PC-9 (cell line): ENCODE measurements at regions of chr11 and their contacts with region 1.

Region 1: DNA sequence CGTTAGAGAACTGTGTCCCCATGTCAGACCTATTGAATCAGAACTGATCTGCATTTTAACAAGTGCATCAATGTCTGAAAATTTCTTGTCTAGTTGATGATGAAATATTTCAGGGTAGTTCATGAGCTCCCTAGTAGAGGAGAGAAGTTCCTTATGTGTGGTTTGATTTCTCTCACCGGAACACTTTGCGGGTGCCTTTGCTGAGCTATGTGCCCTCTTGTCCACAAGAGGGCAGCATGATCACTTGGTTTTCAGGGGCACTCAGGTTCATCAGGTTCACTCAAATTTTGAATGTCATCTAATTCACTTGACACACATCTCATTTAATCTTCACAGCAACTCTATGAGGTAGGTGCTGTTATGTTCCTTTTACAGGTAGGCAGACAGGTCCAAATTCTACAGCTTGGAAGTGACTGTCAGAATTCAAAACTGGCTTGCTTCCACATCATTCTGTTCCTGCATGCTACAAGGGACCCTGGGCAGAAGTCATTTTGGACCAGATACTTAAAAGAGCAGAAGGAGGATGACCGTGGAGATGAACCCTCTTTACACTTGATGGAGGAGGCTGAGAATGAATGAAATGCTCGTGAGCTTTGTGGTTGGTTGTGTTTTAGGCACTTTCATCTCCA is 55.6 kb downstream of the P4HA3 start:
- DNase-seq: peak; percentile 52 to 60
- H3K4me3 ChIP-seq: no peak overlapping the region
- H3K27ac ChIP-seq: no peak overlapping the region
- H3K4me1 ChIP-seq: no peaks in the 10 kb centered on the region
- H3K27me3 ChIP-seq: no peaks in the 10 kb centered on the region
- CTCF ChIP-seq: peak; percentile 97

Region 2: DNA sequence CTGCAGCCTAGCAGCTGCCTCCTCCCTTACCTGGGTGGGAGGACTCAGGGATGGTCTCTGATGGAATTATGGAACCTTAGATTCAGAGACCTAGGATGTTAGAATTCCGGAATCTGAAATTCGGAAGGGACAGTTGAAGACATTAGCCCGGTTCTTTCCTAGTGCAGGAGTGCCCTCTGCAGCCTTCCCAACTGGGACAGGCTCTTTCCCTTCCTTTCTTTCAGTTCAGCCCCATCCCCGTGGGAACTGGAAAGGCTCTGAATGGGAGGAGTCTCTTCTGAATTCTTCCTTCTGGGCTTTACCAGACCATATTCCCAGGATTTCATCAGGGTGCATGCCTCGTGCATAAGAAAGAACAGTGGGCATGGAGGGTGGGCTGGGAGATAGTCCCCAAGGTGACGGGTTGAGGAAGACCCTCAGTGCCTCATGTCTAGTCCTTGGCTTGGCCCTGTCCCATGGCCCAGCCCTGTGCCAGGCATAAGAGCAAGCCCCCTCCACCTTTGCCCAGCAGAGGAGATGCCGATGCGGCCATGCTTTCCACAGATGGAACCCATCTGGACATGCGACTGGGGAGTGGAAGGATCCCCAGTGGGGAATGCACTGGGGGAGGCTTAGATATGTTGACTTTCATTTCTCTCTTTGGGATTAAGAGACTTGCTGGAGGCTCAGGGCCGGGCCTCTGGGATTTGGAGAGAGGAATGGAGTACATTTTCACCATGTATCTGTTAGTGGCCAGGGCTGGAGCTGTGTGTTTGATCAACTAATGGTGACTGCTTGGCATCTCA is 290.6 kb before region 1 on chr11:
- CTCF ChIA-PET with region 1: no interaction called
- POLR2A ChIA-PET with region 1: no interaction called
- intact Hi-C with region 1: loop called (anchors 5 kb)
- DNase-seq: no peak
- H3K4me3 ChIP-seq: no peak overlapping the region
- H3K27ac ChIP-seq: no peak overlapping the region
- H3K4me1 ChIP-seq: no peaks in the 10 kb centered on the region
- H3K27me3 ChIP-seq: no peaks in the 10 kb centered on the region
- CTCF ChIP-seq: no peak

Region 3: GRCh38 chr11:74179234-74180052 is 76.4 kb before region 1 on chr11:
- CTCF ChIA-PET with region 1: no interaction called
- POLR2A ChIA-PET with region 1: interaction called, 14 read pairs
- intact Hi-C with region 1: no loop called
- DNase-seq: no peak
- H3K4me3 ChIP-seq: no peak overlapping the region
- H3K27ac ChIP-seq: 0 out of 2 replicates have a peak overlapping the region, but pooled peaks have one; percentile 12
- H3K4me1 ChIP-seq: peaks cover 1% of the 10 kb centered on the region; the same call in 1 of the 2 replicates
- H3K27me3 ChIP-seq: no peaks in the 10 kb centered on the region
- CTCF ChIP-seq: no peak

Region 4: GRCh38 chr11:74330075-74330858 is 74.4 kb after region 1 on chr11:
- CTCF ChIA-PET with region 1: no interaction called
- POLR2A ChIA-PET with region 1: no interaction called
- intact Hi-C with region 1: no loop called
- DNase-seq: peak in 1 of 2 experiments; percentile 47
- H3K4me3 ChIP-seq: no peak overlapping the region
- H3K27ac ChIP-seq: no peak overlapping the region
- H3K4me1 ChIP-seq: 0 out of 2 replicates have a peak, but pooled peaks cover 5% of the 10 kb centered on the region
- H3K27me3 ChIP-seq: no peaks in the 10 kb centered on the region
- CTCF ChIP-seq: no peak

Region 5: DNA sequence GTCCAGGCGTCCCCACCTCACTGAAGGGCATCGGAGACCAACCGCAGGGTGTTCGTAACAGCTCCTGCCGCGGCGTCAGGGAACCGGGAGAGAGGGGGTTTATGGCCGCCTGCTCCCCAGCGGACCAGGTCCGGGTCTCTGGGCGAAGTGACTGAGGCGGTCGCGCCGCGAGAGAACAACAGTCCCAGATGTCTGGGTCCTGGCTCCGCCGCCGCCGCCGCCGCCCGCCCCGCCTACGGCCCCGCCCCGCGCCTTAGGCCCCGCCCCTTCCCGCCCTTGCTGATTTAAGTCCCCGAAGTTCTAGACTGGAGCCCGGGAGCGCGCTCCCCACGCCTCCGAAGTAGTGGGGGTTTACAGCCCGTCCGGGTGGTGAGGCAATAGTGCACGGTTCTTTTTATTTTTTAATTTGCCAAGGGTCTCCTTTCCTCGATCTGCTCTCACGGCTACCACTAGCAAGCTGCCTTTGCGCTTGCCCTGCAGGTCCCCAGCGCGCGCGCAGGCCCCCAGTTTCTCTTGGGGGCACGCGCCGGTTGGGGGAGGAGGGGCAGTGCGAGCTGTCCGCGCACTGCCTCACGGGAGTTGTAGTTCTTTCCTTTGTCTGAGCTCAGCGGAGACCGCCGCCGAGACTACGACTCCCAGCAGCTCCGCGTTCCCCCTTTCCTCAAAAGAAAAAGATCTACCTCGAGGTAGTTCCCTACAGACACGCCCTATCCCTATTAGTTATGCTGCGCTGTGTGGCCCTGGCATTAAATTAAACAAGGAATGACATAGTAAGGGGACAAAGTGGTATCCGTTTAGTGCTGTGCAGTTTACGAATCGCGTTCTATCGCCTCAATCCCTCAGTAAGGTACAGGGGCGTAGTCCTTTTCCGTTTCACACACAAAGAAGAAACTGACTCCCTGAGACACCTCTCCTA is 142.6 kb after region 1 on chr11 and contains the start of gene PGM2L1:
- CTCF ChIA-PET with region 1: no interaction called
- POLR2A ChIA-PET with region 1: interaction called, 3 read pairs
- intact Hi-C with region 1: loop called (anchors 5 kb)
- DNase-seq: peak; percentile 91 to 95
- H3K4me3 ChIP-seq: peak within 1 kb of the TSS; percentile 76
- H3K27ac ChIP-seq: peak within 1 kb of the TSS; percentile 37
- H3K4me1 ChIP-seq: peaks cover 14% of the 10 kb centered on the region
- H3K27me3 ChIP-seq: no peaks in the 10 kb centered on the region
- CTCF ChIP-seq: no peak
- total RNA-seq, gene PGM2L1: 7.3 and 7.8 TPM in 2 replicates

Region 6: DNA sequence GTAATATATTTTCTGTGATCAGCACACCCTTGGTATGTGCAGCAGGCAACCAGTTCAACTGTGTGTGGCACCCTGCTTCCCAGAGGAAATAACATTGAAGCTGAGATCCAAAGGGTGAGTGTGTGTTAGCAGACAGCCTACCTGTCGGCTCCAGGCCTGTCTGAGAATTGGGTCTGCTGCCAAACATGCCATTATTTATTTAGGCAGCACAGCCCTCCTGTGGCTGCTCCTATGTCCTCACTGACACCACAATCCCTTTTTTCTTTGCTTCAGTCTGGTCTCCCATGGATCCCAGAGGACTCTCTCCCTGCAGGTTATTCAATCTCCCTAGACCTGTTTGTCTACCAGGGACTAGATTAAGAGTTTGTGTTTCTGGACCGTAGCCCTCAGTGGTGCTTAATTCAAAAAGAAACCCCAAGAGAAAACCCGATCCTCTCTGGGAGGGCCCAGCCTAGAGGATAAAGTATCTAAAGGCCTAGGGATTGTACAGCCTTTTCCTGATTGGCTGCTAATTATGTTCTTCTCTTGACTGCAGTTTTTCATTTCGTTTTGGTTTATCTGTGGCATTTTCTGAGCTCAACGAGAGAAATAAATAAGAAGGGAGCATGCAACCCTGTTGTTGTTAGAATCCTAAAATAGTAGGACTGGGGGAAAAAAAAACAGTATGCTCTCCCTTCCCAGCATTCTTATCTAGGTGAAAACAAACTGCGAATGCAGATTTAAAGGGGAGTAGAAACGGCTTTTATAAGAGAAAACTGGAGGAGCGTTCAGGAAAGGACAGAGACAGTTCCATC is 187.4 kb after region 1 on chr11:
- CTCF ChIA-PET with region 1: interaction called, 11 read pairs
- POLR2A ChIA-PET with region 1: interaction called, 3 read pairs
- intact Hi-C with region 1: loop called (anchors 1 kb)
- DNase-seq: peak; percentile 57 to 58
- H3K4me3 ChIP-seq: no peak overlapping the region
- H3K27ac ChIP-seq: no peak overlapping the region
- H3K4me1 ChIP-seq: peaks cover 7% of the 10 kb centered on the region; the same call in 1 of the 2 replicates
- H3K27me3 ChIP-seq: no peaks in the 10 kb centered on the region
- CTCF ChIP-seq: peak; percentile 54

Region 7: DNA sequence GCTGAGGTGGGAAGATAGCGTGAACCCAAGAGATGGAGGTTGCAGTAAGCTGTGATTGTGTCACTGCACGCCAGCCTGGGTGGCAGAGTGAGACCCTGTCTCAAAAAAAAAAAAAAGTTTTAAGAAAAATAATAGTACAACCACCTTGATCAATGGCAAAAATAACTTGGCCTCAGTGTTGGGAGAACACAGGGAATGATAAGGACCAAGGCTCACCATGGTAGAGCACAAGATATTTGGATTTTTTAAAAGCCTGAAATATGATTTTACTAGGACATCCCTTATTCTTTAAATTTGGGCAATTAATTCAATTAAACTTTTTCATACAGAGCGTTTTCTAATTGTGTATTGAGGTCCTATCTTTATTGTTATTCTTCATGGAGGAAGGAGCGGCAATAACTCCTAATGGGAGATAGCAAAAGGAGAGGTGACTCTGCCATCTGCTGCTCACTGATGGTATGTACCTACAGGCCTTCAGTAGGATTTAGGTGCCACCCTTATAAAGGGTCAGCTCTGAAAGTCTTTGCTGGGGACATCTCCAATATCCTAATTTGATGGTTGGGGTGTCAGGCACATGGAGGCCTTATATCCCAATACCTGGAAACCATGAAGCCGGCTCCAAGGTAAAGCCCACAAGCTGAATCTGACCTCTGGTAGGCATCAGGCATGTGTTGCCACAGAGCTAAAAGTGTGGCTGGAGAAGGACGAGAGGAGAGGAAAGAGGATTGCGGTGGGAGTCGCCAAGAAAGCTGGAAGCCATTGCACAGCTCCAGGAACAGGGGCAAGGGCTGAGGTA is 314.6 kb after region 1 on chr11:
- CTCF ChIA-PET with region 1: interaction called, 5 read pairs
- POLR2A ChIA-PET with region 1: no interaction called
- intact Hi-C with region 1: loop called (anchors 2 kb)
- DNase-seq: peak; percentile 59 to 60
- H3K4me3 ChIP-seq: no peak overlapping the region
- H3K27ac ChIP-seq: no peak overlapping the region
- H3K4me1 ChIP-seq: no peaks in the 10 kb centered on the region
- H3K27me3 ChIP-seq: no peaks in the 10 kb centered on the region
- CTCF ChIP-seq: peak; percentile 95

Region 8: GRCh38 chr11:74739546-74740270 is 483.9 kb after region 1 on chr11:
- CTCF ChIA-PET with region 1: no interaction called
- POLR2A ChIA-PET with region 1: no interaction called
- intact Hi-C with region 1: loop called (anchors 10 kb)
- DNase-seq: peak; percentile 58 to 66
- H3K4me3 ChIP-seq: no peak overlapping the region
- H3K27ac ChIP-seq: no peak overlapping the region
- H3K4me1 ChIP-seq: 0 out of 2 replicates have a peak, but pooled peaks cover 4% of the 10 kb centered on the region
- H3K27me3 ChIP-seq: no peaks in the 10 kb centered on the region
- CTCF ChIP-seq: peak; percentile 98